ENCODE measurements at regions of chr1 and their contacts with region 1.

Region 1: DNA sequence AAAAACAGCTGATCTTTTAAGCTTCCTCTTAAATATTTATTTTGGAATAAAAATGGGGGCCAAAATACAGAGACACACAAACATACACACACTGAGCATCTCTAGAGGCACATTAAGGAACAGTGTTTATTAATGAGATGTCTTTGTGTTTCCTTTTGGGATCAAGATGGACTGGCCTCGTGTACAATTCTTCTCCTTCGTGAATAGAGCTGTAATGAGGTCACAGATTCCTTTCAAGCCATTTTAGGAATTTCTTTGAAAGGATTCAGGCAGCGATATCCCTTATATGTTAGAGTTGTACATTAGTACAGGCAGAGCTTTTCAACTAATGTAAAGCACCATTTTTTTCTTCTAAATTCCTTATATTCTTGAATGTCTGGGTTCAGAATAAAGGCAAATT is 295.7 kb downstream of the CHRM3 start:
- DNase-seq: no peak
- ATAC-seq: no peak
- H3K4me3 ChIP-seq: no peak overlapping the region
- H3K27ac ChIP-seq: peak overlapping the region; percentile 57
- H3K4me1 ChIP-seq: peaks cover 30% of the 10 kb centered on the region
- H3K27me3 ChIP-seq: no peaks in the 10 kb centered on the region
- CTCF ChIP-seq: no peak

Region 2: DNA sequence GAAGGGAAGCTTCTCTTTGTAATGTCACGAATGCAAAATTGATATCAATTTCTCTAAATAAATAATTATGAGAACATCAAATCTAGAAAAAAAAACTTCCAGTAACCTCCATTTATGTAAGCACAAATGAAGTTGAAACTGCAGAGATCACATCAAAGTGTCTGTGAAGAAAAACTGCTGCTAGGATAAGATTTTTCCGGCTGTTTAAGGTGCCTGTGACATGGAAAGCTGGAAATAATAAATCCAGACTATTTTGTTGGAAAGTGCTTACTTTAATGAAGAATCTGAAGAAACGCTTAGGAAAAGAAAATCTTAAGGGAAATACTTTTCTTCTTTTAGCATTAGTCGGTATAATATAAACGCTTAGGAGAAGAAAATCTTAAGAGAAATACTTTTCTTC is 238.7 kb before region 1 on chr1:
- CTCF ChIA-PET with region 1: no interaction called
- POLR2A ChIA-PET with region 1: no interaction called
- intact Hi-C with region 1: loop called (anchors 2 kb)
- DNase-seq: no peak
- ATAC-seq: no peak
- H3K4me3 ChIP-seq: no peak overlapping the region
- H3K27ac ChIP-seq: peak overlapping the region; percentile 27
- H3K4me1 ChIP-seq: peaks cover 27% of the 10 kb centered on the region
- H3K27me3 ChIP-seq: no peaks in the 10 kb centered on the region
- CTCF ChIP-seq: no peak

Region 3: DNA sequence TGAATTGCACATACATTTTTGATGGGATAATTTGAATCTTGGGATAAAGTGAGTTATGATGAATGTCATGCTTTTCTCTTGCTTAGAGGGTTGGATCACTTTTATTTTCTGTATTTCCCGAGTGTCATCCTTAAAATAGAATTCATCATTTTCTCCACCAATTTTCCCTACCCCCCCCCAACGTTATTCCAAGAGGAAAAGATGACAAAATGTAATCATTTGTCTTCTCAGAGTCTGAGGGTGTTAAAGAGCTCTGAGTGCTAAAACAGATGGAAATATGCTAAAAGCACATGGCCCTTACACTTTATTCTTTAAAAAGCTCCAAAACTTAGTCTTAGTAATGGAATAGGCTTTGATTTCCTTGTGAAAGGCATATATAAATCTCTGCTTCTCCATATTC is 214.3 kb before region 1 on chr1:
- CTCF ChIA-PET with region 1: no interaction called
- POLR2A ChIA-PET with region 1: no interaction called
- intact Hi-C with region 1: no loop called
- DNase-seq: no peak
- ATAC-seq: no peak
- H3K4me3 ChIP-seq: no peak overlapping the region
- H3K27ac ChIP-seq: no peak overlapping the region
- H3K4me1 ChIP-seq: no peaks in the 10 kb centered on the region
- H3K27me3 ChIP-seq: no peaks in the 10 kb centered on the region
- CTCF ChIP-seq: no peak

Region 4: DNA sequence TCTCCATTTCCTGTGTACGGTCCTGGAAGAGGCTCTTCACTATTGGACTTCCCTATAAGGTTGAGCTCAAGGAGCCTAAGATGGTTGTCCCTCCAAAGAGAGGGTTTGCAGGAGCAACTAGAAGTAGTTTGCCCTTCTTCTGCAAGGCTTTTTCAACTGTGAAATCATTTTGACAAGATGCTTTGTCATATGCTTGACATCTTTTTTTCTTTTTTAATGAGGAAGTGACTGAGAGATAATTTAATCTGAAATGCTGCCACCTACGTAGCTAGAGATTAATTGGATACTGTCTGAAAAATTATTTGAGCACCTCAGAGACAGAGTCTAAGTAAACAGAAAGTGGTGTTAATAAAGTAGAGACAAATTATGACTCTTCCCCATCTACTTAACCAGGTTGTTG is 198.7 kb before region 1 on chr1:
- CTCF ChIA-PET with region 1: no interaction called
- POLR2A ChIA-PET with region 1: no interaction called
- intact Hi-C with region 1: loop called (anchors 5 kb)
- DNase-seq: no peak
- ATAC-seq: no peak
- H3K4me3 ChIP-seq: no peak overlapping the region
- H3K27ac ChIP-seq: no peak overlapping the region
- H3K4me1 ChIP-seq: peaks cover 26% of the 10 kb centered on the region
- H3K27me3 ChIP-seq: no peaks in the 10 kb centered on the region
- CTCF ChIP-seq: no peak

Region 5: GRCh38 chr1:239719642-239720258 is 37.7 kb after region 1 on chr1:
- CTCF ChIA-PET with region 1: no interaction called
- POLR2A ChIA-PET with region 1: no interaction called
- intact Hi-C with region 1: loop called (anchors 2 kb)
- DNase-seq: no peak
- ATAC-seq: no peak
- H3K4me3 ChIP-seq: no peak overlapping the region
- H3K27ac ChIP-seq: no peak overlapping the region
- H3K4me1 ChIP-seq: peaks cover 18% of the 10 kb centered on the region
- H3K27me3 ChIP-seq: no peaks in the 10 kb centered on the region
- CTCF ChIP-seq: no peak